HEK293 (cell line): ENCODE measurements at regions of chr12 and their contacts with region 1.

Region 1: DNA sequence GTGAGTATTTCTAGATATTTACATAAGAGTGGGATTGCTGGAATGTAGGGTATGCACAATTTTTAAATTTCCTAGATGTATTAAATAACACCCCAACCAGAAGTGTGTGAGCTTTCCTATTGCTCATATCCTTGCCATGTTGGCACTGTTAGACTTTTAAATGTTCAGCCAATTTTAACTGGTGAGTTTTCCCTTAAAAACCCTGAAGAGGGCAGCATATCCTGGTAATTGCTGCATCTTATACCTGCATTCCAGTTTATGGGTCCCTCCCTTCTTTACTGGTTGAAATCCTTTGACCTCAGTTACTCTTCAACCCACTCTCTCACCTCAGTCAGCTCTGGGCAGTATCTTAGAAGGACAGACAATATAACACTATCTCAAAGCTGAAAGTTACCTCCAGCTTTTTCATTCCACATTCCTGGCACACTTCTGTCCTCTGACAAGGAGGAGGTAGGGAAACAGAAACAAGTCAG is 270.6 kb downstream of the PAWR start:
- H3K4me3 ChIP-seq: no peak overlapping the region
- H3K27ac ChIP-seq: no peak overlapping the region
- H3K4me1 ChIP-seq: 0 out of 2 replicates have a peak, but pooled peaks cover 2% of the 10 kb centered on the region
- CTCF ChIP-seq: peak; percentile 35; the same call in 1 of the 2 replicates

Region 2: GRCh38 chr12:79121487-79121886 is 298.7 kb before region 1 on chr12:
- CTCF ChIA-PET with region 1: no interaction called
- POLR2A ChIA-PET with region 1: no interaction called
- H3K4me3 ChIP-seq: no peak overlapping the region
- H3K27ac ChIP-seq: no peak overlapping the region
- H3K4me1 ChIP-seq: no peaks in the 10 kb centered on the region
- CTCF ChIP-seq: no peak

Region 3: DNA sequence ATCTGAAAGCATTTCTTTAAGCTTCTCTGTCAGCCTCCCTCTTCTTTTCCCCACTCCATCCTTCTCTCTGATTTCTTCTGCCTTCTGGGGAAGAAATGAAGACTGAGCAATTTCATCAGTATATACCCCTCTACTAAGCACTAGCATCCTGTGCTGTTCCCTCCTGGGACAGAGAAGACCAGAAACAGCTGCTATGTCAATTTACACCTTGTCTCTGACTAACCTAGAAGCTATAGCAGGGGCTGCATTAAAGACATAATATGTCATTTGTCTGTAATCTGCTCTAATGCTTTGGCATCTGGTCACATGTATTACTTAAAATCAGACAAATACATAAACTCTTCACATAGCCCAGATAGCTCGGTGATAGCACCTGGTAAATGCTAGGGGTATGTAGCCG is 26.3 kb before region 1 on chr12:
- CTCF ChIA-PET with region 1: no interaction called
- POLR2A ChIA-PET with region 1: no interaction called
- H3K4me3 ChIP-seq: no peak overlapping the region
- H3K27ac ChIP-seq: no peak overlapping the region
- H3K4me1 ChIP-seq: no peaks in the 10 kb centered on the region
- CTCF ChIP-seq: no peak

Region 4: GRCh38 chr12:79618848-79619404 is 198.7 kb after region 1 on chr12:
- CTCF ChIA-PET with region 1: no interaction called
- POLR2A ChIA-PET with region 1: no interaction called
- H3K4me3 ChIP-seq: no peak overlapping the region
- H3K27ac ChIP-seq: no peak overlapping the region
- H3K4me1 ChIP-seq: peaks cover 11% of the 10 kb centered on the region
- CTCF ChIP-seq: no peak

Region 5: GRCh38 chr12:79737875-79738718 is 317.9 kb after region 1 on chr12:
- CTCF ChIA-PET with region 1: interaction called, 20 read pairs
- POLR2A ChIA-PET with region 1: no interaction called
- H3K4me3 ChIP-seq: no peak overlapping the region
- H3K27ac ChIP-seq: no peak overlapping the region
- H3K4me1 ChIP-seq: no peaks in the 10 kb centered on the region
- CTCF ChIP-seq: no peak